Spleen (tissue), 13 donors: ENCODE measurements at regions of chr3 and their contacts with region 1.

Region 1: DNA sequence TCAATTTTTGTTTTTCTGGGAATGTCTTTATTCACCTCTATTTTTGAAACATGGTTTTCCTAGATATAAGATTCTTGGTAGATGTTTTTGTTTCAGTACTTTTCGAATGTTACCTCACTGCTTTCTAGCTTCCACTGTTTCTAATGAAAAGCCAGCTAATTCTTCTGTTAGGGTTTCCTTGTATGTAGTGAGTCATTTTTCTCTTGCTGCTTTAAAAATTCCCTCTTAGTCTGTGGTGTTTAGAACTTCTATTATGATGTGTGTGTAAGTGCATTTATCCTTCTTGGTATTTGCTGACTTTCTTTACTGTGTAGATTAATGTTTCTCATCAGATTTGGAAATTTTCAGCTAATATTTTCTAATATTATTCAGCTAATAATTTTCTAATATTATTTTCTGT is 151.1 kb upstream of the OSTN start:
- DNase-seq: no peak
- H3K4me3 ChIP-seq: no peak overlapping the region
- H3K27ac ChIP-seq: no peak overlapping the region
- H3K4me1 ChIP-seq: no peaks in the 10 kb centered on the region
- H3K27me3 ChIP-seq: no peaks in the 10 kb centered on the region
- CTCF ChIP-seq: no peak
- POLR2A ChIP-seq: no peak

Region 2: DNA sequence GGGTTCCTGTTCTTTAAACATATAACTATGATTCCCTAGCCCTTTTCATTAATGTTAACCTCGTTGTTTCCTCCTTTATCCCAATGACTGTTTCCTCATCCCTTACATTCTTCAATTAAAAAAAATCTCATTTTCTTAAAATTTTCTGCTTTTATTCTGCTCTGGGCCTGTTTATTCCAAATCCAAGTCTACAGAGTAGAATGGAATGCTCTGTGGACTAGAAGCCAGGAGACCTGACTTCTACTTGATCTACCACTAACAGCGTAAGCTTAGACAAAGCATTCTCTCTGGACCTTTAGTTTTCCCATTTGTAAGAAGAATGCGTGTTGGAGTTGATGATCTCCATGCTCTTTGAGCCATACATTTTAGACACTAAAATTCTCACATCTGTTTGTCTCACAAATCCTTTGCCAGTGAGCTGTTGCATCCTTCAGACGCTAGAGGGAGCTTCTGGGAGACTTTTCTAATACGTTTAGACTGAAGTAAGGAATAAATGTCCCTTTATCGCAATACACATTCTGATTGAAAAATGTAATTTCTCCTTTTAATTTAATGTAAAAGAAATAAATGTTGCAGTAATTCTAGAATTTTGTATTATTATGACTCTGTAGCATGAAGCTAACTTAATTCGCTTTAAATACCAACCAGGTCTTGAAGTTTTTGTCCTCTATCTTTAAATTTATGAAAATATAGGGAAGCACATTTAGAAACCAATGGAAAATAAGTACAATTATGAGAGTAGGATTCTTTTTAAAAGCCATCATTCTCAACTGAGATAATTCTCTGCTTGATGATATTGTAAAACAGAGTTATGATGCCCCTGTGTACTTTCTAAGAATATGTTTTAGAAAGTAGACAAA is 163.7 kb before region 1 on chr3:
- intact Hi-C with region 1: loop called (anchors 5 kb)
- DNase-seq: no peak
- H3K4me3 ChIP-seq: no peak overlapping the region
- H3K27ac ChIP-seq: no peak overlapping the region
- H3K4me1 ChIP-seq: peaks cover 0 to 3% (median 0%) of the 10 kb centered on the region in 6 donors
- H3K27me3 ChIP-seq: peaks cover 0 to 4% (median 0%) of the 10 kb centered on the region in 7 donors
- CTCF ChIP-seq: peak in 10 of 11 experiments; percentile 20 to 83 (median 74)
- POLR2A ChIP-seq: no peak